Transverse colon (tissue), 4 donors: ENCODE measurements at regions of chr10 and their contacts with region 1.

Region 1: GRCh38 chr10:31490858-31491504 is 172.0 kb downstream of the ZEB1 start:
- DNase-seq: no peak
- H3K4me3 ChIP-seq: no peak overlapping the region
- H3K27ac ChIP-seq: no peak overlapping the region
- H3K4me1 ChIP-seq: no peaks in the 10 kb centered on the region
- H3K27me3 ChIP-seq: no peaks in the 10 kb centered on the region
- CTCF ChIP-seq: peak; percentile 41 to 52 (median 45)
- EP300 ChIP-seq: no peak
- POLR2A ChIP-seq: no peak

Region 2: DNA sequence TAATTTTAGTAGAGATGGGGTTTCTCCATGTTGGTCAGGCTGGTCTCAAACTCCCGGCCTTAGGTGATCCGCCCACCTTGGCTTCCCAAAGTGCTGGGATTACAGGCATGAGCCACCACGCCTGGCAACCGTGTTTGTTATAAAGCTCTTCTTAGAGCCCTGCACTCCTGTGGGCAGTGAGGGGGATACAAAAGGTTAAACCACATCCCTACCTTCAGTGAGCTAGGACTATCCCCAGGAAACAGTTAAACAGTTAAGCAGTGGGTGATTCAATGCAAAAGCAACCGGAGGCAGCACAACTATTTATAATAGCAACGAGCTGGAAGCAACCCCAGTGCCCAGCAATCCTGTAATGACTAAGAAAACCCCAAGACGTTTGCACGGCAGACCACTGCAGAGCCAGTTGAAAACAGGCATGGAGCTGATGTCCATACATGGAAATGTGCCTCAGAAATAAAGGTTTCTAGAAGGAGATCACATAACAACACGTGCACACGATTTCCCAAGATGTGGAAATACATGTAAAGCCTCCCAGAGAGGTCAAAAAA is 754.2 kb before region 1 on chr10:
- in situ Hi-C with region 1: loop called in 1 of 4 experiments (anchors 25 kb)
- intact Hi-C with region 1: no loop called
- DNase-seq: peak; percentile 38
- H3K4me3 ChIP-seq: no peak overlapping the region
- H3K27ac ChIP-seq: peak overlapping the region; percentile 38 to 62 (median 60)
- H3K4me1 ChIP-seq: peaks cover 0 to 6% (median 5%) of the 10 kb centered on the region in 4 donors
- H3K27me3 ChIP-seq: no peaks in the 10 kb centered on the region
- CTCF ChIP-seq: no peak
- EP300 ChIP-seq: peak; percentile 77
- POLR2A ChIP-seq: no peak

Region 3: DNA sequence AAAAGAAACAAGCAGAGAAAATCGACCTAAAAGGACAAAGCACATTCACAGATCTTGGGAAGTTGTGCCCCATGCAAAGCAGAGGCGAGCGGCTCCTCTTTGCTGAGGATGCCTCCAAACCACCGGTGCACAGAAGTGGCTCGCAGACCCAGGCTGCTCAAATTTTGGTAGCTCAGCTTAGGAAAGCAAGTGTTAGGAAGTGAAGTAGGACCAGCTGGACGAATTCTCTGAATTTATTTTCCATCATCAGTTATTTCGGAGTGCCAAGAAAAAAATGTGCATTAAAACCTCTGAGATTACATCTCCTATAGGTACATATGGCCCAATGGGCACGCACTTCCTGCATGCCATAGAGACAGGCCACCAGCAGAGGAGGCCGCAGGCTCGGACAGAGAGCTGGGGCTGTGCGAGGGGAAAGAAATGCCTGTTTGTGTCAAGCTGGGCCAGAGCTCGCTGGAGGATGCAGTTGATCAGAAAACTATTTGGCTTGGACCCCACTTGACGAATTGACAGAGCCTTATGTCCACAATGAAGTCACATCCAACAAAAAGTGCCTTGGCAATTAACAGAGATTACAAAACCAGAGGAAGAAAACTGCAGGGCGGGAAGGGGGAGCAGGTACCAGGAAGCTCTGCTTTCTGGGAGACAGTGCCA is 739.2 kb before region 1 on chr10:
- in situ Hi-C with region 1: loop called in 2 of 4 experiments (anchors 25 kb)
- intact Hi-C with region 1: no loop called
- DNase-seq: peak; percentile 24
- H3K4me3 ChIP-seq: no peak overlapping the region
- H3K27ac ChIP-seq: peak overlapping the region in 1 of 4 donors; percentile 46
- H3K4me1 ChIP-seq: peaks cover 0 to 3% (median 1%) of the 10 kb centered on the region in 4 donors
- H3K27me3 ChIP-seq: no peaks in the 10 kb centered on the region
- CTCF ChIP-seq: peak in 4 of 5 experiments; percentile 33 to 95 (median 64)
- EP300 ChIP-seq: no peak
- POLR2A ChIP-seq: no peak

Region 4: DNA sequence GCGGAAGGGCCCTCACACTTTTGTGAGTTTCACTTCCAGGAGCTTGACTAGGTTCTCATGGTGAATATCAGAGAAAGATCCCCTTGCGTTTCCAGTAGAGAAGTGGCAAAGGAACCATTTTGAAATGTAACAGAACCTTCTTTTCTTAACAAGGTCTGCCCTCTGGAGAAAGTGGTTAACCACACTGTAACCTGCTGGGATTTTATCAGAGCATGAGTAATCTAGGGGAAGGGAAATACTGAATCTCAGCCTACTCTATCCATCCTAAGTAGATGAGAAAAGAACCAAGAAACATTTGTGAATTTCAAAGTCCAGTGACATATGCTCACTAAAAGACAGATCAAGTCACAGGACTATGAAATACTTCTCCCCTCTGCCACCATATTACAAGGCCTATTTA is 63.6 kb after region 1 on chr10:
- in situ Hi-C with region 1: no loop called
- intact Hi-C with region 1: no loop called
- DNase-seq: no peak
- H3K4me3 ChIP-seq: no peak overlapping the region
- H3K27ac ChIP-seq: no peak overlapping the region
- H3K4me1 ChIP-seq: no peaks in the 10 kb centered on the region
- H3K27me3 ChIP-seq: no peaks in the 10 kb centered on the region
- CTCF ChIP-seq: no peak
- EP300 ChIP-seq: no peak
- POLR2A ChIP-seq: no peak